Activated CD8-positive, alpha-beta memory T cell treated with anti-CD3 and anti-CD28 coated beads, Interleukin-2, amount 10 ng/mL, durations not matched to agents 7 days and 5 days (primary cell): ENCODE measurements at regions of chr1 and their contacts with region 1.

Region 1: GRCh38 chr1:15788624-15789301 is 18.7 kb downstream of the UQCRHL start:
- DNase-seq: no peak
- ATAC-seq: no peak
- H3K4me3 Mint-ChIP-seq: no peak overlapping the region
- H3K27ac Mint-ChIP-seq: no peak overlapping the region
- H3K4me1 Mint-ChIP-seq: peaks cover 3% of the 10 kb centered on the region
- H3K27me3 Mint-ChIP-seq: peaks cover 8% of the 10 kb centered on the region

Region 2: GRCh38 chr1:15640667-15641066 is 148.1 kb before region 1 on chr1:
- CTCF ChIA-PET with region 1: no interaction called
- DNase-seq: no peak
- ATAC-seq: no peak
- H3K4me3 Mint-ChIP-seq: no peak overlapping the region
- H3K27ac Mint-ChIP-seq: peak overlapping the region; percentile 42
- H3K4me1 Mint-ChIP-seq: peaks cover 8% of the 10 kb centered on the region
- H3K27me3 Mint-ChIP-seq: no peaks in the 10 kb centered on the region

Region 3: DNA sequence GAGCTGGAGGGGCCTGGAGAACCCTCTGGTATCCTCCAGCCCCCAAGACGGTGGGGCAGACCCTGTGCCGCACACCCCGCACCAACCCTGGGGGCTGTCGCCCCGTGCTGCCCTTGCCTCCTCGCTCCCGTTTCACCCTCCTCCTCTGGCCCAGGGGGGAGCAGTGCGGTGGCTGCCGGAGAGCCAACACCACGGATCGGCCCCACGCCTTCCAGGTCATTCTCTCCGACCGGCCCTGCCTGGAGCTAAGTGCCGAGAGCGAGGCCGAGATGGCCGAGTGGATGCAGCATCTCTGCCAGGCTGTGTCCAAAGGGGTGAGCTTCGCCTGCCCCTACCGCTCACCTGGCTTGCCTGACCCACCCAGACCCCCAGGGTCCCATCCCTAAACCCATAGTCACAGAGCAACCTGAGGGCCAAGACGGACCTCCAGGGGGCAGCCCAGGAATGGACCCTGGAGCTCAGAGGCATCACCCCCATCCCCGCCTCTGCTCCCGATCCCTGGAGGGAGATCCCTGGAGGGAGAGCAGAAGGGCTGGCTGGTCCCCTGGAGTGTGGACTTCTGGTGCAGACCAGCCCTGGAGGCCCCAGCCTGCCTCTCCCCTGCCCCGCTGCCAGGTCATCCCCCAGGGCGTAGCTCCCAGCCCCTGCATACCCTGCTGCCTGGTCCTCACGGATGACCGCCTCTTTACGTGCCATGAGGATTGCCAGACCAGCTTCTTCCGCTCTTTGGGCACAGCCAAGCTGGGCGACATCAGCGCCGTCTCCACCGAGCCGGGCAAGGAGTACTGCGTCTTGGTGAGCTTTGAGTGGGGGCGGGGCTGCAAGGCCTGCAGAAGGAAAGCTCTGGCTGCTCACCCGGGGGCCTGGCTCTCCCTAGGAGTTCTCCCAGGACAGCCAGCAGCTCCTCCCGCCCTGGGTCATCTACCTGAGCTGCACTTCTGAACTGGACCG is 56.8 kb before region 1 on chr1:
- CTCF ChIA-PET with region 1: no interaction called
- DNase-seq: no peak
- ATAC-seq: no peak
- H3K4me3 Mint-ChIP-seq: no peak overlapping the region
- H3K27ac Mint-ChIP-seq: no peak overlapping the region
- H3K4me1 Mint-ChIP-seq: no peaks in the 10 kb centered on the region
- H3K27me3 Mint-ChIP-seq: no peaks in the 10 kb centered on the region

Region 4: DNA sequence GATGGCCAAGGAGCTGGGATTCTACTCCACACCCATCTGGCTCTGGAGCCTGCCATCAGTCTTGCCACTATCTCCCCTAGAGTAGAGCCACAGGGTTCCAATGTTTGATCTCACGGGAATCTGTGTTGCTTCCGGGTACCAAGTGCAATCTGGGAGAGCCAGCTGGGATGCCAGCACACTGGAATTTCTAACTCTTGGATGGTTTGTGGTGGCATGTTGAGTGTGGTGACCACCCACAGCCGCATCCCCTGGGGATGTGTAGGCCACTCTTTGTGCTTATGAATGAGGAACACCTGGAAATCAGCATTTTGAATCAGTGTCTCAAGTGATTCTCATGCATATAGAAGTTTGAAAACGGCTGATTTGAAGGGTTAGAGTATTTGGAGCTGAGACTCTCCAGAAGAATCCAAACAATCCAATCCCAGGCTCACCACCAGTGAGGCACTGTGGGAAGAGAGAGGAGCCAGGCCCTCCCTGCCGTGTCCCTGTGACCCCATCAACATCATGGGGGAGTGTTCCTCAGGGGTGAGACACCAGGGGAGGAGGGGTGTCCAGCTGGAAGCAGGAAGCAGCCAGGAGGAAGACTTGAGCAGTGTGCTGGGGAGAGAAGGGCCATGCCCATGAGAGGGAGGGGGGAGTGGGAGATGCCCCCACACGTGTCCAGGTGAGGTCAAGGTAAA is 16.8 kb before region 1 on chr1:
- CTCF ChIA-PET with region 1: interaction called, 10 read pairs
- DNase-seq: no peak
- ATAC-seq: no peak
- H3K4me3 Mint-ChIP-seq: no peak overlapping the region
- H3K27ac Mint-ChIP-seq: no peak overlapping the region
- H3K4me1 Mint-ChIP-seq: no peaks in the 10 kb centered on the region
- H3K27me3 Mint-ChIP-seq: peaks cover 7% of the 10 kb centered on the region

Region 5: GRCh38 chr1:15803354-15803753 is 14.6 kb after region 1 on chr1:
- CTCF ChIA-PET with region 1: interaction called, 10 read pairs
- DNase-seq: no peak
- ATAC-seq: peak; percentile 51
- H3K4me3 Mint-ChIP-seq: no peak overlapping the region
- H3K27ac Mint-ChIP-seq: no peak overlapping the region
- H3K4me1 Mint-ChIP-seq: no peaks in the 10 kb centered on the region
- H3K27me3 Mint-ChIP-seq: peaks cover 11% of the 10 kb centered on the region

Region 6: DNA sequence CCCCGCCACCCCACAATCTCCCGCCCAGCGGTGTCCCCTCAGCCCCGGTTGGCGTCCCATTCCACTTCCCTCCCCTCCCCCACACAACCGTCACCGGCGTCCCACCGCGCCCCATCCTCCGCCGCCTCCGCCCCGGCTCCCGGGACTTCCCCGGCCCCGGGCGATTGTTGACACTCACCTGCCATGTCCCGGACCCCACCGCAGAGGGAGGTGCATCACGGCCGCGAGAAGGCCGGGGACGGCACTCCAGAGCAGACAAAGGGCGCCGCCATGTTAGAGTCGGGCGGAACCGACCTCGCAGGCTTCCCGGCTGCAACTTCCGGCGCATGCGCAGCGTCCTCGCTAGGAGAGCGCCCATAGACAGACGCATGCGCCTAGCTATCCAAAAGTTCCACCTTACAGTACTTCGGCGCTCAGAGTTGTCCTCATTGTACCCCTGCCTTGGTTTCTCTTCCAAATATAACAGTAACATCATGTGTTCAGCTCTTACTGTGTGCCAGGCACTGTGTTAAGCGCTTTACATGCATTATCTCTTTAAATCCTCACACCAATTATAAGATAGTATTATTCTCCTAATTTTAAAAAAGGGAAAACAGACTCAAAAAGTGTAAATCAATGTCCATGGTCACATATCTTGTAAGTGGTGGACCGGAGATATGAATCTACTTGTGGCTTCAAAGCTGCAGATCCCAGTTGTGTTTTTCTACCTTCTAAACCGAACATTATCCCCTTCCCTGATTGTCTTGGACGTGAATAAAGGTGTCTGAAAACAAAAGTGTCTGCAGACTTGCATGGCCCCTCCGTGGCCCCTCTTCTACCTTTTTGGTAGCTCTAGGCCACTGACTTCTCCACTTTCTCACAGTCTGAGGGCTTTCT is 187.3 kb after region 1 on chr1 and contains the start of gene ZBTB17:
- CTCF ChIA-PET with region 1: interaction called, 12 read pairs
- DNase-seq: peak; percentile 96
- ATAC-seq: peak; percentile 95
- H3K4me3 Mint-ChIP-seq: peak within 1 kb of the TSS; percentile 81
- H3K27ac Mint-ChIP-seq: peak within 1 kb of the TSS; percentile 83
- H3K4me1 Mint-ChIP-seq: peaks cover 24% of the 10 kb centered on the region
- H3K27me3 Mint-ChIP-seq: no peaks in the 10 kb centered on the region
- total RNA-seq, gene ZBTB17: 55.8 to 68.8 TPM

Region 7: DNA sequence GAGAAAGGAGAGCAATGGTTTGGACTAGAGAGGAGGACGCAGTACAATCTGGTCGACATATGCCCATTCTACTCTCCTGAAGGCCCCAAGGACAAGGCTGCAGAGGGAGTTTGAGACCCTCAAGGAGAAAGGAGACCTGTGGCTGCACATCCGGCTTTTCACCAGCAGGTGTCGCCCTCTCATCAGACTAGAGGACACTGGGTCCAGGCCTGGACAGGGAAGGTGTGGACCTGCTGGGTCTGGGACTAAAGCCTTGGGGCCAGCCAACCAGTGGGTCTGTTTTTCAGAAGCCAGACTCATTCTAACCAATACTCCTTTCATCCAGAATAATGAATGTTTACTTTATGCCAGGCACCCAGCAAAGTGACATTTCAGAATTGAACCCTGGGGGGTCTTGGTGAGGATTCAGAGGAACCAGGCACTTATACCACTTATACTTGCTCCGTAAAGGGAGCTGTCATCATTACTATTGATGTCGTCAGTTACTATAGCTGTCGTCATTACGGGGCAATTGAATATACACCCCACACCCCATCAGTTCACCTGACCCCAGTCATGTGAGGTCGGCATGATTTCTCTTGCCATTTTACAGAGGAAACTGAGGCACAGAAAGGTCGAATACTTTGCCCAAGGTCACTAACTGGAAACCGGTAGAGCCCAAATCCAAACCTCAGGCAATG is 220.4 kb after region 1 on chr1:
- CTCF ChIA-PET with region 1: interaction called, 14 read pairs
- DNase-seq: peak; percentile 83
- ATAC-seq: peak; percentile 62
- H3K4me3 Mint-ChIP-seq: no peak overlapping the region
- H3K27ac Mint-ChIP-seq: no peak overlapping the region
- H3K4me1 Mint-ChIP-seq: peaks cover 14% of the 10 kb centered on the region
- H3K27me3 Mint-ChIP-seq: peaks cover 15% of the 10 kb centered on the region